ENCODE measurements at regions of chr11 and their contacts with region 1.

Region 1: DNA sequence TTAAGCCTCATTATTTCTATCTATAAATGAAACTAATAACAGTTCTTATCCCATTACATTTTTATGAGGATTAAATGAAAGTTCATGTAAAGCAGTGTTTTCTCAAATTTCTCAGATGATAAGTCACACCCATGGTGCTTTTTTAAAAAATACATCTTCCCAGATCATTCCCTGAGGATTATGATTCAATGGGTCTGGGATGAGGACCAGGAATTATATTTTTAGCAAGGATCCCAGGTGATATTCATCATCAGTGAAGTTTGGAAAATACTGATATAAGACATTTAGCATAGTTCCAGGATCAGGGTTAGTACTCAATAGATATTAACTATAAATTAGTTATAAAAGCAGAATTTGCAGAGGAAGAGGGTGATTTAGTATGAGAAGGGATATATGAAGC is 89.1 kb downstream of the BBOX1 start:
- DNase-seq: no peak
- H3K4me3 ChIP-seq: no peak overlapping the region
- H3K27ac ChIP-seq: no peak overlapping the region
- H3K4me1 ChIP-seq: no peaks in the 10 kb centered on the region
- H3K27me3 ChIP-seq: no peaks in the 10 kb centered on the region
- CTCF ChIP-seq: no peak
- POLR2A ChIP-seq: no peak

Region 2: GRCh38 chr11:27161071-27161470 is 31.4 kb after region 1 on chr11:
- intact Hi-C with region 1: no loop called
- DNase-seq: no peak
- H3K4me3 ChIP-seq: no peak overlapping the region
- H3K27ac ChIP-seq: no peak overlapping the region
- H3K4me1 ChIP-seq: no peaks in the 10 kb centered on the region
- H3K27me3 ChIP-seq: no peaks in the 10 kb centered on the region
- CTCF ChIP-seq: no peak
- POLR2A ChIP-seq: no peak

Region 3: GRCh38 chr11:27174021-27174420 is 44.3 kb after region 1 on chr11:
- intact Hi-C with region 1: no loop called
- DNase-seq: peak; percentile 52 to 72
- H3K4me3 ChIP-seq: no peak overlapping the region
- H3K27ac ChIP-seq: peak overlapping the region in 1 of 2 donors; percentile 61
- H3K4me1 ChIP-seq: no peaks in the 10 kb centered on the region
- H3K27me3 ChIP-seq: peaks cover 0 to 3% of the 10 kb centered on the region in 2 donors
- CTCF ChIP-seq: no peak
- POLR2A ChIP-seq: no peak

Region 4: GRCh38 chr11:27679136-27680015 is 549.7 kb after region 1 on chr11:
- intact Hi-C with region 1: loop called (anchors 5 kb)
- DNase-seq: no peak
- H3K4me3 ChIP-seq: no peak overlapping the region
- H3K27ac ChIP-seq: no peak overlapping the region
- H3K4me1 ChIP-seq: no peaks in the 10 kb centered on the region
- H3K27me3 ChIP-seq: no peaks in the 10 kb centered on the region
- CTCF ChIP-seq: no peak
- POLR2A ChIP-seq: no peak

Measured in breast epithelium (tissue), 4 donors.